ENCODE measurements at regions of chr4 and their contacts with region 1.

Region 1: GRCh38 chr4:8176547-8177399 is 18.2 kb upstream of the ABLIM2 start:
- DNase-seq: peak; percentile 59 to 79 (median 75)
- H3K4me3 ChIP-seq: no peak overlapping the region
- H3K27ac ChIP-seq: no peak overlapping the region
- H3K4me1 ChIP-seq: peaks cover 0 to 26% (median 8%) of the 10 kb centered on the region in 4 experiments
- H3K27me3 ChIP-seq: no peaks in the 10 kb centered on the region

Region 2: GRCh38 chr4:8192748-8193738 is 16.3 kb after region 1 on chr4:
- CTCF ChIA-PET with region 1: interaction called, 116 read pairs
- POLR2A ChIA-PET with region 1: interaction called, 3 read pairs
- DNase-seq: peak; percentile 92 to 96 (median 95)
- H3K4me3 ChIP-seq: no peak overlapping the region
- H3K27ac ChIP-seq: no peak overlapping the region
- H3K4me1 ChIP-seq: peaks cover under 1 to 80% (median 65%) of the 10 kb centered on the region in 4 experiments
- H3K27me3 ChIP-seq: no peaks in the 10 kb centered on the region

Region 3: GRCh38 chr4:8228319-8229250 is 51.8 kb after region 1 on chr4:
- CTCF ChIA-PET with region 1: interaction called, 52 read pairs
- POLR2A ChIA-PET with region 1: no interaction called
- DNase-seq: peak; percentile 78 to 97 (median 96)
- H3K4me3 ChIP-seq: peak overlapping the region in 1 of 7 experiments; percentile 28
- H3K27ac ChIP-seq: no peak overlapping the region
- H3K4me1 ChIP-seq: peaks cover 8 to 62% (median 57%) of the 10 kb centered on the region in 4 experiments
- H3K27me3 ChIP-seq: no peaks in the 10 kb centered on the region

Region 4: DNA sequence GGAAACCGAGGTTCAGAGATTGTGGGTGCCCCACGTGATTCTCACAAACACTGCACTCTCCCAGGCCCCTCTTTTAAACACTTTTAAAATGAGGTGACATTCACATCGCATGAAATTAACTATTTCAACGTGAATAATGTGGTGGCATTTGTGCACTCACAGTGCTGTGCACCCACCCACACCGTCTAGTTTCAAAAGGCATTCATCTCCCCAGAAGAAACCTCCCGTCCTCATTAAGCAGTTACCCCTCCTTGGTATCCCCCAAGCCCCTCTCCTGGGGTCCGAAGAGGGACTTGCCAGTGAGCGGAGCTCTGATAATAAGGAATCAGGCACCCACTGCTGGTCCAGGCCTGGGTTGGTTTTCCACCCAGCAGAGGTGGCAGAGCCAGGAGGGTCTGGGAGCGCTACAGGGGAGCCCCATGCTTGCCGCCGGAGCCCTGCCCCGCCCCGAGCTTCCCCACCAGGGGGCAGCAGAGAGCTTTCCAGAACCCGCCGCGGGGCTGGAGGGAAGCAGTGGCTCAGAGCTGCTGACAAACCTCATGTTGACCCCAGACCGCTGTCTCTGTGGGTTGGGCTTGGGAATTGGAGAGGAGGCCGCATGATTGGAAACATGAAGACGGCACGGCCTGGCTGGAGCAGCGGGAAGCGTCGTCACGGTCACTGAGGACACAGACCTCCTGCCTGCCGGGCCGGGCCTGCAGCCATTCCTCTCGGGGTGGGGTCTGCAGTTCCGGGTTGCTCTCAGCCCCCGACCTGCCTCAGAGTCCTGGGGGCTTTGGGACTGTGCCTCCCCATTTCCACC is 65.3 kb after region 1 on chr4:
- CTCF ChIA-PET with region 1: interaction called, 17 read pairs
- POLR2A ChIA-PET with region 1: no interaction called
- DNase-seq: peak; percentile 64 to 83 (median 78)
- H3K4me3 ChIP-seq: no peak overlapping the region
- H3K27ac ChIP-seq: no peak overlapping the region
- H3K4me1 ChIP-seq: peaks cover 0 to 33% (median 20%) of the 10 kb centered on the region in 4 experiments
- H3K27me3 ChIP-seq: no peaks in the 10 kb centered on the region